ENCODE measurements at regions of chr17 and their contacts with region 1.

Region 1: DNA sequence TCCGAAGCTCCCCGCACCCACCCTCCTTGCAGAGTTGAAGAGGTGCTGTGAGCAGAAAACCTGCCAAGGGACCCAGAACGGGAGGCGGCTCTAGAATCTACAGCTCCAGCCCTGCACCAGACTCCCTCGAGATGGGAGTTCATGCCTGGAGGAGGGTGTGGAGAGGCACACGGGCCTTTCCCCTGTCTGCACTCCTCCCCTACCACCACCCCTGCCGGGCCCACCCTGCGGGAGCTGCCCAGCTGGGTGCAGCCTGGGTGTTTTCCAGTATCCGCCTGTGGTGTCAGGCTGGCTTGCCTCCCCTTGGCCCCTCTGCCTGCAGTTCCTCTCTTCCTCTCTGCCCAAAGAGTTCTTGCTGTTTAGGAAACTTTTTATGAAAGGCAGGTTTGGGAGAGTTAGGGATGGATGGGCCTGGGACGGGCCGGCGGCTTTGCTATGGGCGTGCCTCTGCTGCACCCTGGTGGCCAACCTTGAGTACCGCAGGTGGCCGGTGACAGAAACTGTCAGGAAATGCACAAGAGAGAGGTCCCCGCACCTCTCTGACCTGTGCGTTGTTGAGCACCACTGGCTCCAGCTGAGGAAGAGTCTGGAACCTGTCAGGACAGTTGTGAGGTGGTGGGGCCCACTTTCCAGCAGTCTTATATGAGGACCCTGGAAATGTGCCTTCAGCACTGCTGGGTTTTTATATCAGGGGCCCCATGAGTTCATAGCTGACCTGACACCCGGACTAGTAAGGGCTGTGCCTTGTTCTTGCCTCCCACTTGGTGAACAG is 354.1 kb downstream of the SEC14L1 start:
- DNase-seq: peak; percentile 78 to 82 (median 82)
- ATAC-seq: peak; percentile 70 to 86 (median 78)
- H3K4me3 ChIP-seq: no peak overlapping the region
- H3K27ac ChIP-seq: no peak overlapping the region
- H3K4me1 ChIP-seq: peaks cover 0 to 7% (median 3%) of the 10 kb centered on the region in 4 donors
- H3K27me3 ChIP-seq: no peaks in the 10 kb centered on the region
- CTCF ChIP-seq: peak; percentile 87 to 98 (median 96)
- POLR2A ChIP-seq: no peak

Region 2: DNA sequence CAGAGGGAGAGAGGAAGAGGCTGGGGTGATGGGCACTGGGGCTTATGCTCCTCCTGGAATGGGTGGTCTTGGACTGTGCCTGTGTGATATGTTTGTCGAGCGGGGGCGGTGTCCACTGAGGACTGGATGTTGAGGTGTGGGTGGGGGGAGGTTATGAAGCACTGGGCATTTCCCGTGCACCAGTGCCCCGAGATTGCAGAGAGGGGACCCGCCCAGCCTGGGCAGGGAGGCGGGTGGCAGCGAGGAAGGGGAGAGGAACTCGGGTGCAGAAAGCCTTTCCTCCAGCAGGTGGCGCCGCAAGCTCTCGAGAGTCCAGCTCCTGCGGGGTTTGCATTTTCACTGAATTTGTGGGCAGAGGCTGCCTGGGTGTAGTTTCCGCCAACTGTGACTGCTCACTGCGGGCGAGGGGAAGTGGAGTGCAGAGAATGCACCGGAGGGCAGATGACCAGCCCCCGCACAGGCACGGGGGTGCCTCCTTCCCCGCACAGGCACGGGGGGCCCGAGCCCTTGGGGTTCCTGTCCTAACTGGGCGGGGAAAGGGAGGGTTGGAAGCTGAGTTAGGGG is 163.5 kb before region 1 on chr17:
- intact Hi-C with region 1: loop called (anchors 2 to 5 kb)
- DNase-seq: peak; percentile 91 to 92 (median 91)
- ATAC-seq: peak; percentile 80 to 81 (median 80)
- H3K4me3 ChIP-seq: peak overlapping the region in 1 of 3 donors; percentile 11
- H3K27ac ChIP-seq: peak overlapping the region in 1 of 3 donors; percentile 51
- H3K4me1 ChIP-seq: peaks cover 0 to 43% (median 19%) of the 10 kb centered on the region in 4 donors
- H3K27me3 ChIP-seq: no peaks in the 10 kb centered on the region
- CTCF ChIP-seq: peak; percentile 91 to 97 (median 94)
- POLR2A ChIP-seq: no peak

Region 3: GRCh38 chr17:77391668-77392375 is 103.0 kb before region 1 on chr17:
- intact Hi-C with region 1: loop called in 1 of 2 experiments (anchors 10 kb)
- DNase-seq: no peak
- ATAC-seq: peak in 1 of 4 donors; percentile 1
- H3K4me3 ChIP-seq: peak overlapping the region in 2 of 3 donors; percentile 0 to 29
- H3K27ac ChIP-seq: peak overlapping the region; percentile 46 to 60 (median 59)
- H3K4me1 ChIP-seq: peaks cover 3 to 78% (median 49%) of the 10 kb centered on the region in 4 donors
- H3K27me3 ChIP-seq: no peaks in the 10 kb centered on the region
- CTCF ChIP-seq: no peak
- POLR2A ChIP-seq: no peak

Region 4: GRCh38 chr17:77429919-77430752 is 64.7 kb before region 1 on chr17:
- intact Hi-C with region 1: loop called (anchors 5 kb)
- DNase-seq: peak; percentile 88 to 93 (median 88)
- ATAC-seq: peak; percentile 70 to 83 (median 75)
- H3K4me3 ChIP-seq: no peak overlapping the region
- H3K27ac ChIP-seq: peak overlapping the region; percentile 37 to 73 (median 68)
- H3K4me1 ChIP-seq: peaks cover 0 to 62% (median 31%) of the 10 kb centered on the region in 4 donors
- H3K27me3 ChIP-seq: no peaks in the 10 kb centered on the region
- CTCF ChIP-seq: peak; percentile 74 to 85 (median 82)
- POLR2A ChIP-seq: no peak

Region 5: DNA sequence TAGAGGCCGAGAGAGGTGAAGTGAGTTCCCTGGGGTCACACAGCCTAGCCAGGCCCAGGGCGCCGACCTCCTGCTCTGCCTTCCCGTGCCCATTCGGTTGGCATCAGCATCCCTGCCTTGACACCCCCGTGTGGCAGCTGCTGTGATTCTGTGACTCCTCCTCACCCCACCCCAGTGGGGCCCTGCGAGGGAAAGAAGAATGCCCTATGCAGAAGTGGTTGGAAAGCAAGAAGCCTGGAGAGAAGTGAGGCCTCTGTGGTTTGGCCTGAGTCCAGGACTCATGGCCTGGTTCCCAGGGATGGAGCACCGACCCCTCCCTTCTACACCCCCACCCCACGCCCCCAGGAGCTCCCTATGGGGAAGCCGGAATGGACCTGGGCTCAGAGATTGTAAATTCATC is 57.8 kb before region 1 on chr17:
- intact Hi-C with region 1: loop called in 1 of 2 experiments (anchors 5 kb)
- DNase-seq: peak in 1 of 3 donors; percentile 50
- ATAC-seq: peak; percentile 1 to 21 (median 12)
- H3K4me3 ChIP-seq: no peak overlapping the region
- H3K27ac ChIP-seq: no peak overlapping the region
- H3K4me1 ChIP-seq: peaks cover 0 to 36% (median 5%) of the 10 kb centered on the region in 4 donors
- H3K27me3 ChIP-seq: no peaks in the 10 kb centered on the region
- CTCF ChIP-seq: no peak
- POLR2A ChIP-seq: no peak